Mammary epithelial cell (primary cell): ENCODE measurements at regions of chr6 and their contacts with region 1.

Region 1: GRCh38 chr6:139080255-139080920 is 51.8 kb downstream of the ABRACL start:
- DNase-seq: peak; percentile 61
- H3K4me3 ChIP-seq: no peak overlapping the region
- H3K27ac ChIP-seq: no peak overlapping the region
- H3K4me1 ChIP-seq: no peaks in the 10 kb centered on the region
- H3K27me3 ChIP-seq: no peaks in the 10 kb centered on the region
- CTCF ChIP-seq: no peak

Region 2: DNA sequence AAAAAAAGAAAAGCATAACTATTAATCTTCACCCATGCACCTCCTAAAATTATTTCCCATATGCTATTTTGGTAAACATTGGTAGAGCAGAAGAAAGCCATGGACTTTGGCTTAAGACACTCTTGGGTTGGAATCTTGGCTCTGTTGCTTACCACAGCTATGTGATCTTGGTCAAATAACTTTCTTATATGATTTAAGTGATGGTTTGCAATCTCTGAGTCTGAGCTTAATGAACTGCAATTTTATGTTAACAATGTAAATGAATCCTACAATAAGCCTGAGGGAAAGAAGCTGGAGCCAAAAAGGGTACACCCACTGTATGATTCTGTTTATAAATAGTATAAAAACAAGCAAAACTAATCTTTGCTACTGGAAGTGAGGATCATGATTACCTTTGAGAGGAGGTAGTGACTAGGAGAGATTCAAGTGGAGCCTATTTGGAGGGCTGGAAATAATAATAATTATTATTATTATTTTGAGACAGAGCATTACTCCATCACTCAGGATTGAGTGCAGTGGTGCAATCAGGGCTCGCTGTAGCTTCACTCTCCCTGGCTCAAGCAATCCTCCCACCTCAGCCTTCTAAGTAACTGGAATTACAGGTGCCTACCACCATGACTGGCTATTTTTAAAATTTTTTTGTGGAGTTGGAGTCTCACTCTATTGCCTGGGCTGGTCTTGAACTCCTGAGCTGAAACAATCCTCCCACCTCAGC is 17.3 kb before region 1 on chr6:
- CTCF ChIA-PET with region 1: no interaction called
- dilution Hi-C with region 1: no loop called
- in situ Hi-C with region 1: no loop called
- intact Hi-C with region 1: loop called (anchors 2 kb)
- DNase-seq: no peak
- H3K4me3 ChIP-seq: no peak overlapping the region
- H3K27ac ChIP-seq: no peak overlapping the region
- H3K4me1 ChIP-seq: peaks cover 8% of the 10 kb centered on the region
- H3K27me3 ChIP-seq: no peaks in the 10 kb centered on the region
- CTCF ChIP-seq: no peak